Heart right ventricle (tissue), 16 donors: ENCODE measurements at regions of chr15 and their contacts with region 1.

Region 1: DNA sequence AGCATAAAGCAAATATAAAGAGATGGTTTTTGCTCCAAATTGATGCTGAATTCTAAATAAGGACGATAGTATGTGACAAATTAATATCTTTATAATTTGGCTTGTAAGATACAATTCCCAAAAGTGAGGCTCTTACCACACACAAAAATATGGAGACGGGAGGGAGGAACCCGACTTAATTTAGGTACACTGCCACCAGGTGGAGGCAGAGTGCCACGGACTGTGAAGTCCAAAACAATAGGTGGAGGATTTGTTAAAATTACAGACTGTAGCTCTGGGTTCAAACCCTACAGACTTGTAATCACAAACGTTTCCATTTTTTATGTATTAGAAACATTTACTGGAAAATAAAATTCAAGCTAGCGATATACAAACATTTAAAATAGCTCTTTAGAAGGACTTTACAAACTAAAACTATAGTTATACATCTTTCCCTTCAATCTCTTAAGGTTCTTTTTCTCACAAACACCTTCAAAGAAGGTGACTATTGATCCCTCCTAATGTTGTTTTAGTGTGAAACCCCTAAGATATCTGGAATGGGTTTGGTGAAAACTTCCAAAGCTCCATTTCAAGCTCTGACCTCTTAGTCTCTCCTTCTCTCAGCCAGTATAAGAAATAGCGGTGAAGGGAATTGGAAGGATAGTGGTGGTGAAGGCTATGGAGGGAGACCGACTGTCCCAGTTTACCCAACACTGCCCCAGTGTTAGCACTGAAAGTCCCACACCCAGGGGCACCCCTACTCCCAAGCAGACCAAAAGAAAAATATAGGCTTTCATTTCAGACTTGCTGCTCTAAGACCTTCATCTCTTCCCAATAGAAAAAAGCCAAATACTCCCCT is 89.7 kb downstream of the AQP9 start:
- DNase-seq: peak; percentile 71 to 74
- ATAC-seq: peak in 7 of 8 donors; percentile 49 to 86 (median 72)
- H3K4me3 ChIP-seq: no peak overlapping the region
- H3K27ac ChIP-seq: peak overlapping the region in 9 of 10 donors; percentile 18 to 78 (median 68)
- H3K4me1 ChIP-seq: peaks cover 6 to 45% (median 35%) of the 10 kb centered on the region in 9 donors
- H3K27me3 ChIP-seq: no peaks in the 10 kb centered on the region
- CTCF ChIP-seq: peak; percentile 66 to 90 (median 85)

Region 2: DNA sequence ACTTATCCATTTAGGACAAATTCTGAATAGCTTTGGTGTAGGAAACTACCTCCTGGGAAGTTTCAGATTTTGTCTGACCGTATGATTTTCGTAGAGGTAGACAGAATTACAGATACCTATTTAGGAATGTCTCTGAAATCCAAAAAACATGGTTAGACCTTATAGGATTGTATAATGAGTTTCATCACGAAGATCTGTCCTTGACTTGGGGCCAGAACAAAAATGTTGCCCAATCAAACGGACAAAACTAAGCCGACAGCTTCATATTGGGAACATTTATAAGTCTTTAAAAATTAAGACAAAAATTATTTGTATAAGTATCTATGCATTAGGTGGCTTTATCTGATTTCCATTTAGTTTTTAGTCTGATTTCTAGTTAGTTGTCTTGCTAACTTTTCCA is 1795.6 kb before region 1 on chr15:
- intact Hi-C with region 1: no loop called
- DNase-seq: no peak
- ATAC-seq: no peak
- H3K4me3 ChIP-seq: no peak overlapping the region
- H3K27ac ChIP-seq: no peak overlapping the region
- H3K4me1 ChIP-seq: no peaks in the 10 kb centered on the region
- H3K27me3 ChIP-seq: no peaks in the 10 kb centered on the region
- CTCF ChIP-seq: no peak

Region 3: GRCh38 chr15:57861036-57861638 is 366.8 kb before region 1 on chr15:
- intact Hi-C with region 1: no loop called
- DNase-seq: peak in 1 of 2 donors; percentile 36
- ATAC-seq: peak in 6 of 8 donors; percentile 31 to 57 (median 48)
- H3K4me3 ChIP-seq: no peak overlapping the region
- H3K27ac ChIP-seq: no peak overlapping the region
- H3K4me1 ChIP-seq: peaks cover 0 to 9% (median 6%) of the 10 kb centered on the region in 9 donors
- H3K27me3 ChIP-seq: no peaks in the 10 kb centered on the region
- CTCF ChIP-seq: peak; percentile 76 to 91 (median 85)

Region 4: GRCh38 chr15:58146749-58147148 is 81.2 kb before region 1 on chr15:
- intact Hi-C with region 1: no loop called
- DNase-seq: no peak
- ATAC-seq: peak in 4 of 8 donors; percentile 56 to 78 (median 74)
- H3K4me3 ChIP-seq: peak overlapping the region in 1 of 10 donors; percentile 2
- H3K27ac ChIP-seq: peak overlapping the region in 1 of 10 donors; percentile 89
- H3K4me1 ChIP-seq: peaks cover 0 to 27% (median 0%) of the 10 kb centered on the region in 9 donors
- H3K27me3 ChIP-seq: peaks cover 0 to 11% (median 0%) of the 10 kb centered on the region in 7 donors
- CTCF ChIP-seq: no peak

Region 5: GRCh38 chr15:58666957-58667356 is 439.0 kb after region 1 on chr15:
- intact Hi-C with region 1: loop called in 2 of 10 experiments (anchors 5 kb)
- DNase-seq: no peak
- ATAC-seq: peak in 1 of 8 donors; percentile 40
- H3K4me3 ChIP-seq: no peak overlapping the region
- H3K27ac ChIP-seq: peak overlapping the region in 4 of 10 donors; percentile 13 to 42 (median 32)
- H3K4me1 ChIP-seq: peaks cover 3 to 23% (median 7%) of the 10 kb centered on the region in 9 donors
- H3K27me3 ChIP-seq: no peaks in the 10 kb centered on the region
- CTCF ChIP-seq: no peak

Region 6: DNA sequence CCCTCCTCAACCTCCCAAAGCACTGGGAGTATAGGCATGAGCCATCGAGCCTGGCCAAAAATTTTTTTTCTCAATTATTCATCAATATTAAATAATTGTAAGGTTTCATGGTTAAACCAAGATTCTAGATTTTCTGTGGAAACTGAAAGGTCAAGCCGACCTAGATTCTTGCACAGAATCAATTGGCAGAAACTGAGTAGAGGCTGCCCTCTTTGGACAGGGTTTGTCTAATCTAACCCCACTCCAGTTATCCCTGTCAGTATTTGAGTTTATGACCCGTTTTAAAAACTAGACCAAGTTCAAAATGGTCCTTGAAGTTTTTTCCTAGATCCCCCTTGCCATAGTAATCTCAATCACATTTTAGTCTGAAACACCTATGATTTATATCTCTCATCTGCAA is 530.2 kb after region 1 on chr15:
- intact Hi-C with region 1: loop called in 7 of 10 experiments (anchors 5 to 10 kb)
- DNase-seq: no peak
- ATAC-seq: peak in 1 of 8 donors; percentile 53
- H3K4me3 ChIP-seq: no peak overlapping the region
- H3K27ac ChIP-seq: no peak overlapping the region
- H3K4me1 ChIP-seq: no peaks in the 10 kb centered on the region
- H3K27me3 ChIP-seq: no peaks in the 10 kb centered on the region
- CTCF ChIP-seq: peak in 7 of 9 donors; percentile 21 to 57 (median 43)